PC-3 (cell line): ENCODE measurements at regions of chr22 and their contacts with region 1.

Region 1: DNA sequence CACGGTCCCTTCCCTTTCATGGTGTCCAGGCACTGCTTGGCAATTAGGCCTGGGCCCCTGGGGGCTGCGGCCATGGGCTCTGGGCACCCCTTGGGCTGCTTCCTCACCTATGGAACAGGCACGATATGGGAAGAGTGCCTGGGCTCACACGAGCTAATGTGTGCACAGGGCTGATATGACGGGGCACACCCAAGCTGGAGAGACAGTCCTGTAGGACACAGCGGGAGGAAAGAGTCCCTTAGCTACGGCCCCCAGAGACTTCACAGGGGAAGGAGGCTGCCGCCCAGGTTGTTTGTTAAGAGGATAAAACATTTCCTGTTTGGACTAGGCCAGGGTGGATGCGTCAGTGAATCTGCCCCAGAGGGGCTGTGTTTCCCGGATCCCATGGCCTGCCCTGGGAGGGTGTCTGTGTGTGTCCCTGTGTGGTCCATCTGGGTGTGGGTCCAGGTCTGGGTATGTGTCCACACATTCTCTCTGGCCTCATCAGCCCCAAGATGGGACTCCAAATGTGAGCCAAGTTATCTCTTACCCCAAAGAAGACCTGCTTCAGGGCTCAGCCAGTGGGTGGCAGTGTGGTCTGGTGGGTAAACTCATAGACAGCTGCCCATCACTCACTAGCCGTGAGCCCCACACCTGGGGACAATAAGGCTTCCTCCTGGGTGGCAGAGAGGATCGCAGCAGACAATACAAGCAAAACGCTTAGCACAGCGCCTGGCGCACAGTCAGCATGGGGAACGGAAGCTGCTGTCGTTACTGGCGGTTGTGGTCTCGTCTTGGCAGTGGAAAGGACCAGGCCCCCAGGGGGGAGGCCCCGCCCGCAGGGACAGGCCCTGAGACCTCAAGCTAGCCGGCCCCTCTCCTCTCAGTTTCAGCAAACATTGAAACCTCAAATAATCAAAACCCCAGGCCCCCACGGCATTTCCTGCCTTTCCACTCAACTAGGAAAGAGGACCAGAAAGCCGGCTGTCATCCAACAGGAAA is 3.2 kb upstream of the EMID1 start:
- DNase-seq: peak; percentile 31
- ATAC-seq: peak; percentile 33; the same call in 1 of the 2 replicates
- H3K4me3 ChIP-seq: no peak overlapping the region
- H3K27ac ChIP-seq: no peak overlapping the region
- H3K4me1 ChIP-seq: no peaks in the 10 kb centered on the region
- H3K27me3 ChIP-seq: no peaks in the 10 kb centered on the region
- CTCF ChIP-seq: peak; percentile 63

Region 2: GRCh38 chr22:28316014-28316413 is 886.5 kb before region 1 on chr22:
- CTCF ChIA-PET with region 1: no interaction called
- POLR2A ChIA-PET with region 1: no interaction called
- intact Hi-C with region 1: no loop called
- DNase-seq: no peak
- ATAC-seq: no peak
- H3K4me3 ChIP-seq: no peak overlapping the region
- H3K27ac ChIP-seq: no peak overlapping the region
- H3K4me1 ChIP-seq: no peaks in the 10 kb centered on the region
- H3K27me3 ChIP-seq: no peaks in the 10 kb centered on the region
- CTCF ChIP-seq: no peak

Region 3: GRCh38 chr22:29245637-29246385 is 43.3 kb after region 1 on chr22:
- CTCF ChIA-PET with region 1: interaction called, 6 read pairs
- POLR2A ChIA-PET with region 1: no interaction called
- intact Hi-C with region 1: loop called (anchors 2 kb)
- DNase-seq: peak; percentile 68
- ATAC-seq: peak; percentile 76
- H3K4me3 ChIP-seq: no peak overlapping the region
- H3K27ac ChIP-seq: no peak overlapping the region
- H3K4me1 ChIP-seq: no peaks in the 10 kb centered on the region
- H3K27me3 ChIP-seq: no peaks in the 10 kb centered on the region
- CTCF ChIP-seq: peak; percentile 87

Region 4: DNA sequence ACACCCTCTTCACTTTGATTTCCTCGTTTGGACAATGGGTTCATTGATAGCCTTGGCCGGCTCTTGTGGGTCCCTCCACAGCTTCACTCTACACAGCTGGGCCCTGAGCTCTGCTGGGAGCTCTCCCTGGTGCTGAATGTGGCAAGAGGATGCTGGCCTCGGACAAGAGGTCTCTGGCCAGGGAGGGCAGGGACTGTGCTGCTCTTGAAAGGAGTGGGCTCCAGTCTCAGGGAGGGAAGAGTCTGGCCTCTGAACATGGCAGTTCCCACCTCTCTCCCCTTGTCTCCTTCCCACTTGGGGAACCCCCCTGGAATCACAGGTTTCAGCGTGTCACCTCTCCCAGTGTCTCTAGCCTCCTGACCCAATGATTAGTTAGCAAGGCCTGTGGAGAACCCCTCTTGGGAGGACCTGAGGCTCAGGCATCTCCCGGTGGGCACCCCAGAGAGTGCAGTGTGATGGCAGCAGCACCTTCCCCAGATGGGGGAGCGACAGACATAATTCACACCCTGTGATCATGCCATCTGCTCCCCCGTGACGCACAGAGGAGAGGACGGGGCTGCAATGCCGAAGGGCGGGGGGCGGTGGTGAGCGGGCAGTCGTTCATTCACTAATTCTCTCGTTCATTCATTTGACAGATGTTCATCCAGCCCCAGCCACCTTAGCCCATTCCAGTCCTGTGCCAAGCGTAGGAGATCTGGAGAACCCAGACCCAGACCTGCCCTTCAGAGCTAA is 514.5 kb after region 1 on chr22:
- CTCF ChIA-PET with region 1: no interaction called
- POLR2A ChIA-PET with region 1: no interaction called
- intact Hi-C with region 1: no loop called
- DNase-seq: peak; percentile 69
- ATAC-seq: peak; percentile 71
- H3K4me3 ChIP-seq: no peak overlapping the region
- H3K27ac ChIP-seq: no peak overlapping the region
- H3K4me1 ChIP-seq: no peaks in the 10 kb centered on the region; the same call in 1 of the 2 replicates
- H3K27me3 ChIP-seq: peaks cover 8% of the 10 kb centered on the region
- CTCF ChIP-seq: no peak